ENCODE measurements at regions of chr6 and their contacts with region 1.

Region 1: GRCh38 chr6:137076277-137077068 is 31.7 kb upstream of the IL20RA start:
- DNase-seq: peak; percentile 82
- H3K4me3 ChIP-seq: no peak overlapping the region
- H3K27ac ChIP-seq: no peak overlapping the region
- H3K4me1 ChIP-seq: no peaks in the 10 kb centered on the region
- CTCF ChIP-seq: peak; percentile 93

Region 2: DNA sequence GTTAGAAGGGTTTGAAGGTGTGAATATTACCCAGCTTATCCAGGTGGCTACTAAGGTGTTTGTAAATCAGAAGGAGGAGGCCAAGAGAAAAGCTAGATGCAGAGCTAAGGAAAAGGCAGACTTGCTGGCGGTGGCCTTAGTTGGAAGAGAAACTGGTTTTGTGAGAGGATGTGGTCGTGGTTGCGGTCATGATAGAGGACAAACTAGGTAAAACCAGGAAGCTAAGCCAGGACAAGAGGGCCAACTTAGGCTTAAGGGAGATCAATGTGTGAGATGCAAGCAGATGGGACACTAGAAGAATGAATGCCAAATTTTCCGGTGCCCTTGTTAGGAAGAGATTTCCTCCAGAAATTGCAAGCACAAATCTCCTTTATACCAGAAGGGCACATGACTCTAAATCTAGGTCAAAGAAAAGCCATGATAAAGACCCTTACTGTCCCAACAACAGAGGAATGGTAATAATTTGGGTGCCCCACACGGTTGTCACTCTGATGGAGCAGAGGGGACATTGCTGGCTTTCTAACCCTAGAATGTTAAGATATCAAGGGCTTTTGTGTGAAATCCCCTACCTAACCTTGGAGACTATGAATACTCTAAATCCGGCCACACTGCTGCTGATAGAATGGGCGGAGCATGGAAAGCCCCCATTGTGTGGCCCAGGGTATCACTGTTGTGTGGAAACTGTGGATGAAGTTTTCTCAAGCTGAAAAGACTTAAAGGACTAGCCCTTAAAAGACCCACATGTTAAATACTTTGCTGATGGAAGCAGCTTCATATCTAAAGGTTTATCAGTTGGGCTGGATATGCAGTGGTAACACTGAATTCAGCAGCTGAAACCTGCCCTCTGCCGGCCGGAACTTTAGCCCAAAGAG is 89.1 kb after region 1 on chr6:
- CTCF ChIA-PET with region 1: no interaction called
- POLR2A ChIA-PET with region 1: no interaction called
- intact Hi-C with region 1: loop called (anchors 1 kb)
- DNase-seq: peak; percentile 79
- H3K4me3 ChIP-seq: no peak overlapping the region
- H3K27ac ChIP-seq: no peak overlapping the region
- H3K4me1 ChIP-seq: peaks cover 15% of the 10 kb centered on the region
- CTCF ChIP-seq: peak; percentile 87